RWPE1 (cell line): ENCODE measurements at regions of chr7 and their contacts with region 1.

Region 1: GRCh38 chr7:20598459-20599309 is 16.8 kb upstream of the ABCB5 start:
- DNase-seq: peak; percentile 59
- H3K27ac ChIP-seq: no peak overlapping the region
- CTCF ChIP-seq: peak; percentile 83

Region 2: GRCh38 chr7:19708397-19709248 is 890.1 kb before region 1 on chr7 and contains the start of gene POLR1F:
- CTCF ChIA-PET with region 1: interaction called, 15 read pairs
- POLR2A ChIA-PET with region 1: no interaction called
- DNase-seq: peak; percentile 93
- H3K27ac ChIP-seq: peak within 1 kb of the TSS; percentile 63
- CTCF ChIP-seq: peak; percentile 96

Region 3: GRCh38 chr7:19713676-19714075 is 885.0 kb before region 1 on chr7:
- CTCF ChIA-PET with region 1: interaction called, 15 read pairs
- POLR2A ChIA-PET with region 1: no interaction called
- DNase-seq: peak; percentile 9
- H3K27ac ChIP-seq: no peak overlapping the region
- CTCF ChIP-seq: peak; percentile 79

Region 4: GRCh38 chr7:19798986-19799385 is 799.7 kb before region 1 on chr7:
- CTCF ChIA-PET with region 1: no interaction called
- POLR2A ChIA-PET with region 1: no interaction called
- DNase-seq: no peak
- H3K27ac ChIP-seq: no peak overlapping the region
- CTCF ChIP-seq: no peak